ENCODE measurements at regions of chr1 and their contacts with region 1.

Region 1: DNA sequence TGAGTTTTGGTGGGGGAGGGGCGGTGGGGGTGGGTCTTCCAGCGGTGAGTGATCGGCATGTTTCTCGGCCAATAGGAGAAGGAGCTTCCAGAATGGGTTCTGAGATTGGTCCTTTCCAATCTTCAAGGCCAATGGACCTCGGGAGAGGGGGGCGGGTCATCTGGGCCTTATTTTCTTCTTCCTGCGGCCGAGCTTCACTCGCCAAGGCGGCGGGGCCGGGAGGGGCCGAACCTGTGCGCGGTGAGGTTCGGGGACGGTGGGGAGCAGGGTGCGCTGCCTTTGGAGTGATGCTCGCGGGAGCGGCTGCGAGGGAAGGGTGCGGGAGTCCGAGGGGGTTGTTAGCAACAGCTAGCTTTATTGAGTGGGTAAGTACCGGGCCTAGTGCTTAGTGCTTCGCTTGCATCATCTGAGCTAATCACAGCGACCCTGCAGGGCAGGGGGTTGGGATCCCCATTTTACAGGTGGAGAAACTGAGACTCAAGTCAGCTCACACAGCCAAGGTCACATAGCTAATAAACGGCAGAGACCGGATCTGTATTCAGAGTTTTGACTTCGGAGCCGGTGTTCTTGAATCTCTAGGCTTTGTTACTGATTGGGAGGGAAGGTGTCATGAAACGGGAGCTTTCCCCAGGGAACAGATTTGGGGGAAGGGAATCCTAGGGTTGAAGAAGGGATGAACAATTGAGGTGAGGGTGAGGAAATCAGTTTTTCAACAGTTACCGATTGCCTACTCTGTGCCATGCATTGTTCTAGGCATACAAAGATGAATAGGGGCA is 549 bp downstream of the KDM4A start:
- DNase-seq: peak in 34 of 35 experiments; percentile 73 to 96 (median 88)
- ATAC-seq: peak; percentile 77 to 83 (median 79)
- H3K4me3 ChIP-seq: peak overlapping the region; percentile 80 to 83
- H3K4me3 Mint-ChIP-seq: peak overlapping the region; percentile 88 to 95 (median 95)
- H3K27ac ChIP-seq: peak overlapping the region; percentile 81
- H3K27ac Mint-ChIP-seq: peak overlapping the region; percentile 97 to 99
- H3K4me1 ChIP-seq: peaks cover 10 to 31% of the 10 kb centered on the region in 2 experiments
- H3K4me1 Mint-ChIP-seq: peaks cover 38 to 44% (median 38%) of the 10 kb centered on the region in 3 donors
- H3K27me3 ChIP-seq: no peaks in the 10 kb centered on the region
- H3K27me3 Mint-ChIP-seq: no peaks in the 10 kb centered on the region

Region 2: GRCh38 chr1:43671626-43672330 is 21.3 kb after region 1 on chr1:
- CTCF ChIA-PET with region 1: no interaction called
- POLR2A ChIA-PET with region 1: no interaction called
- DNase-seq: no peak
- ATAC-seq: no peak
- H3K4me3 ChIP-seq: no peak overlapping the region
- H3K4me3 Mint-ChIP-seq: no peak overlapping the region
- H3K27ac ChIP-seq: no peak overlapping the region
- H3K27ac Mint-ChIP-seq: no peak overlapping the region
- H3K4me1 ChIP-seq: no peaks in the 10 kb centered on the region
- H3K4me1 Mint-ChIP-seq: no peaks in the 10 kb centered on the region
- H3K27me3 ChIP-seq: no peaks in the 10 kb centered on the region
- H3K27me3 Mint-ChIP-seq: no peaks in the 10 kb centered on the region

Region 3: DNA sequence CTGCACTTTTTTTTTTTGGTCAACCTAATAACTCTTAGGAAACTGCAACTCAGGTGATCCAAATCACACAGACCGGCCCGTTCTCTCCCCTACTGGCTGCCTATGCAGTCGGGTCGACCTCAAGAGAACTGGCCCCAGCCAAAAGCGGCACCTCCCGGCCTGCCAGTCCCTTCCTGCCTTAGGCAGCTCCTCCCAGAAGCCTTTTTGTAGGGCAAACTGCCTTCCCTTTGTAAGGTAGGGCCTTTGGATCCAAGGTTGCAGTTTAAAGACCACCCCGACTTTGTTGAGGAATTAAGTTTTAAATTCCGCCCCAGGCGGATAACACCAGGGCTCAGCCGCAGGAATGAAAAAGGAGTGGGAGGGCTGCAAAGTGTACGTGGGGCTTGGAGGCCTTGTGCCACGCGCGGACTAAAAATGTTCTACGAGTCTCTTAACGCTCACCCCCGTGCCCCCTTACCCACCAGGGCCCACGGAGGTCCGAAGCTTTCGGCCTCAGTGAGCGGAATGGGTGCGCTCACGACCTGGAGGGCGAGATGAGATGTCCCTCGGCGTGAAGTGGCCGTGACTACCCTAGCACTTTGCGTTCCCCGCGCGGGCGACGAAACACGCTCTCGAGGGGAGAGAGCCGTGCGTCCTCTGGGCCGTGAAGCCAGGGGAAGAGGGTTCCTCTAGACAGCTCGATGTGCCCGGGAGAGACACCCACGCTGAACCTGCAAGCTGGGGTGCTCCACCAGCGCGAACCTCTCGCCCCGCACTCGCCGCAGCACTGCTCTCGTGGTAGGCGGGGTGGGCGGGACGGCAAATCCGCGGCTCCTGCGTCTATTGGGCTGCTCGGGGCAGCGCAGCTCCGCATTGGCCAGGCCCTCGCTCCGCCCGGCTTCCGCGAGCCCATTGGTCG is 56.3 kb after region 1 on chr1:
- CTCF ChIA-PET with region 1: interaction called, 3 to 10 read pairs
- POLR2A ChIA-PET with region 1: interaction called in 1 of 2 experiments, 7 read pairs
- DNase-seq: peak; percentile 77 to 94 (median 88)
- ATAC-seq: peak; percentile 98 to 99 (median 98)
- H3K4me3 ChIP-seq: peak overlapping the region; percentile 67 to 75
- H3K4me3 Mint-ChIP-seq: peak overlapping the region; percentile 82 to 89 (median 84)
- H3K27ac ChIP-seq: no peak overlapping the region
- H3K27ac Mint-ChIP-seq: peak overlapping the region in 1 of 2 donors; percentile 66
- H3K4me1 ChIP-seq: peaks cover 7 to 16% of the 10 kb centered on the region in 2 experiments
- H3K4me1 Mint-ChIP-seq: peaks cover 13 to 30% (median 26%) of the 10 kb centered on the region in 3 donors
- H3K27me3 ChIP-seq: no peaks in the 10 kb centered on the region
- H3K27me3 Mint-ChIP-seq: no peaks in the 10 kb centered on the region